ENCODE measurements at regions of chr6 and their contacts with region 1.

Region 1: GRCh38 chr6:3456755-3457466 is at the start of gene SLC22A23:
- DNase-seq: peak; percentile 53 to 95 (median 72)

Region 2: DNA sequence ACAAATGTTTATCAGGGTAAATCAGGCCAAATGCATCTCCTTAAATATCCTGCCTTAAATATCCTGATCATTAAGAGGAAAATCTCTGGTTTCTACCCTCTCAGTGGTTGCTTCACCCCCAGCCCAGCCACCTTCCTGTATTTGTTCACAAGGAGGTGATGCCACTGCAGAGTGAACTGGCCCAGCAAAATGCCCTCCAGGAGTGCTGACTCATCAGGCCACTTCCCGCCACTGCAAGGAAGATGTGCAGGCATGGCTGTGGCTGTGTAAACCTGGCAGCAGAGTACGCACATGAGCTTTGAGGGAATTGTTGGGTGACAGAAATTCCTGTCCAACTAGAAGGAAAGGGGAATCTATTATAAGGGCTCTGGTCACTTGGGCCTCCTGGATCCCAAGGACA is 443.4 kb before region 1 on chr6:
- intact Hi-C with region 1: no loop called
- DNase-seq: no peak

Region 3: DNA sequence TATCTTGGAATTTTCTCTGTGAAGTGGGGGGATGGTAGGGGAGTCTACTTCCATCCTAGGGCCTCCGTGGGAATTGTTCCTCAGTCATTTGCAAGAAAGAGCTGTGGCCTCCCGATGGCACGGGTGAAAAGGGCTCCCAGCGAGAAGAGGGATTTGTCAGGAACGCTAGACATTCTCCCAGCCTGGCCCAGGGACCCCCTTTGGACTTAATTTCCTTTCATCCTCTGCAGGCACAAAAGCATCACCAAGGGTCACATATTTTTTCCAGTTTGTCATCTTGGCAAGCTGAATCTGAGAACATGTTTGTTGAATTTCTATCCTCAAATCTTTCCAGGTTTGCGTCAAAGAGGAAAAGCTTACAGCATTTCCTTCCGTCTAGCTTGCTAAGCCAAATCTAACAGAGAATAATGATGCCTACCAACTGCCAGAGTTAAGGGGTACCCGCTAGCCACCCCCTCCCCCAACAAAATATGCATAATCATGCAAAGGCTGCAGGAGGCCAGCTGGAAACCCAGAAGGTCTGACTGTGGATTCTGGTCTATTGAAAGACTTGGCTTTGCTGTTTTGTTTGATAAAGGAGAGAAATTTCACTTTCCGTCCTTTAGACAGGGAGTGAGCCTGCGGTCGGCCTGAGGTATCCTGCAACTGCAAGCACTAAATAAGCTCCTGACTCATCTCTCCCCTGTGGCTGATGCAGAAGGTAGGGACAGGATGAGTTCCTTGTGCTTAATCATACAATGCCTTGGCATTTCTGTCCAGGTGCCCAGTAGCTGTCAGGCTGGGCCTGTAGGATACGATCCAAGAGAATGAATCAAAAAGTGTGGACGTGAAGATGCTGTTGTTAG is 175.1 kb before region 1 on chr6:
- intact Hi-C with region 1: loop called (anchors 5 kb)
- DNase-seq: peak in 4 of 10 donors; percentile 8 to 81 (median 46)

Region 4: DNA sequence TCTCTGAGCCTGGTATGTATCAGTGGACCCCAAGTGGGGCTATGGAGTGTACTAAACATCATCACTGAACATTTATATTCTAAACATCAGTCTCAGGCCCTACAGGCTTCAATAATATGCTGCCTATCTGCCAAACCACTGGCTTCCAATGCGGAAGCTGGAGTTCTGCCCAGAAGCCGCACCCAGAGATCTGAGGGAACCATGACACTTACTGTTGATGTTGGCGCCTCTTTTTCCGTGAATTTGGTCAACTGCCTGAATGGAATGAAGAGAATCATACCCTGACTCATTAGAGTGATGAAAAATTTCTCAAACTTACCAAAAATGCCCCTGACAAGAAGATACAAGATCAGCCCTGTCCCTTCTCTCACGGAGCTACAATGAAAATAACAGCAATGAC is 66.2 kb before region 1 on chr6:
- intact Hi-C with region 1: loop called (anchors 5 kb)
- DNase-seq: peak in 4 of 10 donors; percentile 41 to 92 (median 60)

Region 5: DNA sequence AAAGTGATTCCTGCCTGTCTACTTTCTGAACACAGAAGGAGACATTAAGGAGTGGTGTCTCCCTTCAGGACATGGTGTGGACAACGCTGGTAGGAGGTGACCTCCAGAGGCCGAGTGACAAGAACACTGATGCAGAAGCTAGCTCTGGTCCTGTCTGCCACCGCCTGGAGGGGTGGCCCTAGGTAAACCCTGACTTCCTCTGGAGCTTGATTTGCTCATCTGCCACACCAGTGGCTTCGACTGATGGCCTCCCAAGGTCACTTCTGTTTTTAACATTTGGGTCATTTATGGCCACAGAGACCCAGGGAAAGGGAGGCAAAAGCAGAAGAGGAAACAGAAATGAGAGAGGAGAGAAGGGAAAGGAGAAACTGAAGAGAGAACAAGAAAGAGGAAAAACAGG is 49.3 kb after region 1 on chr6:
- intact Hi-C with region 1: no loop called
- DNase-seq: no peak